ENCODE measurements at regions of chr6 and their contacts with region 1.

Region 1: GRCh38 chr6:143575440-143575839 is 63.9 kb upstream of the FUCA2 start:
- DNase-seq: peak; percentile 86
- ATAC-seq: peak; percentile 88
- H3K4me3 ChIP-seq: no peak overlapping the region
- H3K27ac ChIP-seq: no peak overlapping the region
- H3K4me1 ChIP-seq: peaks cover 3% of the 10 kb centered on the region
- H3K27me3 ChIP-seq: no peaks in the 10 kb centered on the region
- CTCF ChIP-seq: peak; percentile 93
- POLR2A ChIP-seq: 0 out of 2 replicates have a peak, but pooled peaks have one; percentile 29
- RAD21 ChIP-seq: peak; percentile 98

Region 2: DNA sequence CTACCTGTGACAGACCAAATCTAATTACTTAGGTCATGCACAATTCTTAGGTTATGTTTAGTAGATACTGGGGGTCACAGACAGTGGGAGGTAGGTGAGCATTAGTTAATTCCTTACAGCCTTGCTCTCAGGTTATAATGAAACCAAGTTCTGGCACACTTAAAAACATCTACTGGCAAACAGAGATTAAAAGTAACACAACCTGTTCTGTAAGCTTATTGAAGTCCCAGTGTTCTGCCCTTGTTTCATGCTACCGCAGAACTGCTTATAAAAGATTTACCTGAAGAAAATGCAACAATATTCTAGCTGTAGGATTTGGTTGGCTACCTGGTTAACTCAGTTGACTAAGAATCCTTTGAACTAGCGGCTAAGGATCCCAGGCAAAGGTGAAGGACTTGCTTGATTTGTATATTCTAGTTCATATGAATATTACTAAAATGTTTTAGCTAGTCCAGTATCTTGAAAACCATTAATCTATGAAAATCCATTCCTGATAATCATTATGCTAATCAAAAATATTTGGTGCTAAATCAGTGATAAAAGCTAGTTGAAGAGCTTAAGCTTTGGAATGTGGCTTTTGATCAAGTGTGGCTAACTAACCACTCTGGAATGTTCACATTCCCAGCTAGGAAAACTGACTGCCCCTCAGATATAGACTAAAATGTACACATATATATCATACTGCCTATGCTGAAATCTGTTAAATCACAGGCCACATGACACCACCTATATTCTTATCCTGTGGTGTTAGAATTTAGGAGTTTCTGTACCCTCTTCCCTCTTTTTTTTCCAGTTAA is 117.7 kb before region 1 on chr6:
- CTCF ChIA-PET with region 1: no interaction called
- POLR2A ChIA-PET with region 1: no interaction called
- dilution Hi-C with region 1: no loop called
- in situ Hi-C with region 1: no loop called
- intact Hi-C with region 1: no loop called
- DNase-seq: peak; percentile 21
- ATAC-seq: peak; percentile 76
- H3K4me3 ChIP-seq: no peak overlapping the region
- H3K27ac ChIP-seq: no peak overlapping the region
- H3K4me1 ChIP-seq: no peaks in the 10 kb centered on the region
- H3K27me3 ChIP-seq: no peaks in the 10 kb centered on the region
- CTCF ChIP-seq: no peak
- POLR2A ChIP-seq: no peak
- RAD21 ChIP-seq: no peak

Region 3: GRCh38 chr6:143647191-143647590 is 71.8 kb after region 1 on chr6:
- CTCF ChIA-PET with region 1: no interaction called
- POLR2A ChIA-PET with region 1: no interaction called
- dilution Hi-C with region 1: no loop called
- in situ Hi-C with region 1: no loop called
- intact Hi-C with region 1: no loop called
- DNase-seq: no peak
- ATAC-seq: no peak
- H3K4me3 ChIP-seq: no peak overlapping the region
- H3K27ac ChIP-seq: no peak overlapping the region
- H3K4me1 ChIP-seq: no peaks in the 10 kb centered on the region
- H3K27me3 ChIP-seq: no peaks in the 10 kb centered on the region
- CTCF ChIP-seq: no peak
- POLR2A ChIP-seq: no peak
- RAD21 ChIP-seq: no peak

Region 4: DNA sequence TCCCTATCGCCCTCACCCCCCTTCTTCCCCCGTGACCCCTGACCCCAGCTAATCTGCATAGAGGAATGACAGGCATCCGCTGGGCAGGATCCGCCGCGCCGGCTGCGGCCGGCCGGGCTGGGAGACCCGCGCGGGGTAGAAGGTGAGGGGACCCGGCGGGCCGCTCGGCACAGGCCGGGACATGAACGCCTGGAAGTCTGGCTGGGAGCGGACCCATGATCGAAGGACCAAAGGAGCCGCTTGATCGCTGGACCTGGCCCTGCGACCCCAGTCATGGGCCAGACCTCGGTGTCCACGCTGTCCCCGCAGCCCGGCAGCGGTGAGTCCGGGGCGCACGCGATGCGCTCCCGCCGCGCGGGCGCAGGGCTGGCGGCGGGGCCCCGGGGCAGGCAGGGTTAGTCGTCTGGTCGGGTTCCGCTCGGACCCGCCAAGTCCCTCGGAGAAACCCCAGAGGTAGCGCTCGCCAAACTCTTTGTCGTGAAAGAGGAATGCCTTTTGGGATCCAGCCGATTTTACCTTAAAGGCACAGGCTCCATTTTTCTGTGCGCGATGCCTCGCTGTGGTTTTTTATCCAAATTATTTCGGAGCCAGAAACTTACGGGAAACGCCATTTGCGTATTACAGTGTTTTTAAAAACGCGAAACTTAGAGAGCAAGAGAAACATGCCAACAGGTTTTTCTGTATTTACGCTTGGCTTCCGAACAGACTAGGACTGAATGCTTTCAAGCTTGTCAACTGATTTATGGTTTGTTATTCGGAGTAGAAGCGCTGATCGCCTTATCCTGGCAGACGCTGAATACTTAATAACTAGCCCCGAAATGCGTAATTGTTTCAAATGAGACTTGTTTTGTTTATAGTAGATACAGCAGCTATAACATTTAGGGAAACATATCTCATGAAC is 102.7 kb after region 1 on chr6 and contains the start of gene PHACTR2:
- CTCF ChIA-PET with region 1: interaction called, 3 read pairs
- POLR2A ChIA-PET with region 1: no interaction called
- dilution Hi-C with region 1: no loop called
- in situ Hi-C with region 1: no loop called
- intact Hi-C with region 1: loop called (anchors 2 kb)
- DNase-seq: peak; percentile 71
- ATAC-seq: peak; percentile 84
- H3K4me3 ChIP-seq: peak within 1 kb of the TSS; percentile 97
- H3K27ac ChIP-seq: peak within 1 kb of the TSS; percentile 99
- H3K4me1 ChIP-seq: peaks cover 9% of the 10 kb centered on the region
- H3K27me3 ChIP-seq: no peaks in the 10 kb centered on the region
- CTCF ChIP-seq: no peak
- POLR2A ChIP-seq: no peak
- RAD21 ChIP-seq: no peak
- total RNA-seq, gene PHACTR2: 74.2 and 76.9 TPM in 2 replicates

Region 5: GRCh38 chr6:143842902-143843676 is 267.6 kb after region 1 on chr6 and contains the start of gene LTV1:
- CTCF ChIA-PET with region 1: no interaction called
- POLR2A ChIA-PET with region 1: no interaction called
- dilution Hi-C with region 1: no loop called
- in situ Hi-C with region 1: no loop called
- intact Hi-C with region 1: loop called (anchors 1 kb)
- DNase-seq: peak; percentile 96
- ATAC-seq: peak; percentile 99
- H3K4me3 ChIP-seq: peak within 1 kb of the TSS; percentile 86
- H3K27ac ChIP-seq: peak within 1 kb of the TSS; percentile 88
- H3K4me1 ChIP-seq: peaks cover 3% of the 10 kb centered on the region; the same call in 1 of the 2 replicates
- H3K27me3 ChIP-seq: no peaks in the 10 kb centered on the region
- CTCF ChIP-seq: no peak
- POLR2A ChIP-seq: peak; percentile 89
- RAD21 ChIP-seq: no peak
- total RNA-seq, gene LTV1: 11.1 and 26.1 TPM in 2 replicates

Region 6: GRCh38 chr6:144008120-144008811 is 432.8 kb after region 1 on chr6 and contains the start of gene PLAGL1:
- CTCF ChIA-PET with region 1: interaction called, 23 read pairs
- POLR2A ChIA-PET with region 1: no interaction called
- dilution Hi-C with region 1: no loop called
- in situ Hi-C with region 1: loop called (anchors 5 kb)
- intact Hi-C with region 1: loop called (anchors 1 kb)
- DNase-seq: peak; percentile 55
- ATAC-seq: peak; percentile 91
- H3K4me3 ChIP-seq: peak within 1 kb of the TSS; percentile 69
- H3K27ac ChIP-seq: peak within 1 kb of the TSS; percentile 24
- H3K4me1 ChIP-seq: no peaks in the 10 kb centered on the region; the same call in 1 of the 2 replicates
- H3K27me3 ChIP-seq: no peaks in the 10 kb centered on the region
- CTCF ChIP-seq: no peak
- POLR2A ChIP-seq: peak; percentile 87
- RAD21 ChIP-seq: no peak
- total RNA-seq, gene PLAGL1: 15.3 and 23.3 TPM in 2 replicates

Region 7: DNA sequence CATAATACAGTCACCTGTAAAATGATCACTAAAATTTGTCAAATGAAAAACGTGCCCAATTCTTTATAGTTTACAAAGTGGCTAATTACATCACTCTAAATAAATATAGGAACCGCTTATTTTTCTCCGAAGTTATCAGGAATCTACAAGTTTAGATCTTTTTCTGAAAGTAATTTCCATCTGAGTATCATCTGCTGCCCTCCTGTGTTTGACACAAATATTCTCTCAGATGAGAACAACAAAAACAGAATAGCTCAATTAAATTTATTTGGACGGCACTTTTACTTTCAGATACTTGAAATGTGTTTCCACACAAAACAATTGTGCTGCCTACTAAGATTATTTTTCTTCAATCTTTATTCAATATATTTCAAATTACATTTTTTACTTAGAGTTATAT is 514.9 kb after region 1 on chr6:
- CTCF ChIA-PET with region 1: no interaction called
- POLR2A ChIA-PET with region 1: no interaction called
- dilution Hi-C with region 1: no loop called
- in situ Hi-C with region 1: no loop called
- intact Hi-C with region 1: loop called (anchors 1 kb)
- DNase-seq: no peak
- ATAC-seq: no peak
- H3K4me3 ChIP-seq: no peak overlapping the region
- H3K27ac ChIP-seq: no peak overlapping the region
- H3K4me1 ChIP-seq: peaks cover 5% of the 10 kb centered on the region
- H3K27me3 ChIP-seq: no peaks in the 10 kb centered on the region
- CTCF ChIP-seq: no peak
- POLR2A ChIP-seq: no peak
- RAD21 ChIP-seq: no peak

Measured in IMR-90 (cell line).